Mammary epithelial cell (primary cell): ENCODE measurements at regions of chr11 and their contacts with region 1.

Region 1: DNA sequence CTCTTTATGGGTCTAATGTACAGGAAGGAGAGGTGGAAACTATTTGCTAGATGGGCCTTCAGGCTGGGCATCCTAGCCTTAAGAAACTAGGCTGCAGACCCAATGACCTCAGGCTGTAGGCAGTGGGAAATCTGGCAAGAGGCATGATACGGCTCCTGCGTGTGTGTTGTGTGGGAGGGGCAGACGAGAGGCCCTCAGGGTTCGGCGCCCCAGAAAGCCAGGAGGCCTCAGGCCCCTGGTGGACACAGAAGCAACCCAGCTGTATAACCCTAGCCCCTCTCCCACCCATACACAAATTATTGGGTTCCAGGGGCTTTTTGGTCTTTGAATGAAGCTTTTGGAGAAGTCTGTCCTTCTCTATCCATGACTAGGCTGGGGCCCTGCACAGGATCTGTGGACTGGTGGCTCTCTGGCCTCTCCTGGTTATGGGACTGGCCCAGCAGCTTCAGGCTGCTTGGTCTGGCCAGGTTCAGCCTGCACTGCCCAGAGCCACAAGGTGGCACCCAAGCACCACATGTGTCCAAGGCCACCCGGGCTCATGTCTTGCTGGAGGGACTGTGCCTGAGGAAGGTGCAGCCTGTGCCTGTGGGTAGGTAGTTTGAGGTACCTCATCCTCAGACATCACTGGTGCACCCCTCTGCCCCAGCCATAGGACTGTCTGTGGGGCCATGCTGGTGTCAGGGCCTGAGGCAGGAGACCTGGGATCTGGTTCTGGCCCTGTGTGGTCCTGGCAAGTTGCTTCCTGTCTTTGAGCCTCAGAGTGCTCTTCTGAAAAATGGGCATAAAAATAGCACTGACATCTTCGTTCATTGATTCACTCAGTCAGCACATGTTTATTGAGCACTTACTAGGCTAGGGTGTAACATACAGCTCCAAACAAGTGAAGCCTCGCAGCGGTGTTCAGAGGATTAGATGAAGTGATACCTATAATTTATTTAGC is 87.5 kb downstream of the RRM1 start:
- DNase-seq: peak; percentile 44
- H3K4me3 ChIP-seq: no peak overlapping the region
- H3K27ac ChIP-seq: no peak overlapping the region
- H3K4me1 ChIP-seq: no peaks in the 10 kb centered on the region
- H3K27me3 ChIP-seq: no peaks in the 10 kb centered on the region
- CTCF ChIP-seq: peak; percentile 81 to 90

Region 2: DNA sequence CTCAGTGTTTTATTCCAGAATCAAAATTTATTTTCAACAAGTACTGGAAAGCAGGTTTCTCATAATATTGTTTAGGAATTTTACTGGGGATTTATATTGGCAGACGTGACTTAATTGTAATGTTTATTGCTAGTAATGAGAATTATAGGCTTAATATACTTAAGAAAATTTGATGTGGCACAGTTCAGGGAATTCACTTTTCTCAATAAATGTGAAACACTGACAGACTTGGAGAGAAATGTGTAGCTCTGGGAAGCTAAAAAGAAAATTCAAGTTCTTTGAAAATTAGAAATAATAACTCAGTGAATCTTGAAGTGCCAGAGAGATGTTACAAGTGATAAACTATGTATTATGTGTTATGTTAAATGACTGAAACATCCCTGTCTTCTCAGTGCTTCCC is 639.0 kb after region 1 on chr11 and contains the start of gene OR51F2:
- CTCF ChIA-PET with region 1: interaction called, 20 read pairs
- dilution Hi-C with region 1: no loop called
- in situ Hi-C with region 1: no loop called
- intact Hi-C with region 1: loop called (anchors 1 kb)
- DNase-seq: no peak
- H3K4me3 ChIP-seq: no peak within 1 kb of the TSS
- H3K27ac ChIP-seq: no peak within 1 kb of the TSS
- H3K4me1 ChIP-seq: peaks cover 10% of the 10 kb centered on the region
- H3K27me3 ChIP-seq: no peaks in the 10 kb centered on the region
- CTCF ChIP-seq: no peak
- total RNA-seq, gene OR51F2: not detected